Ascending aorta (tissue), 2 donors: ENCODE measurements at regions of chr19 and their contacts with region 1.

Region 1: GRCh38 chr19:40716655-40717324 is at the starts of genes COQ8B and ITPKC:
- DNase-seq: peak; percentile 96 to 99
- H3K4me3 ChIP-seq: peak within 1 kb of the TSS; percentile 72 to 100
- H3K27ac ChIP-seq: peak within 1 kb of the TSS; percentile 97 to 99
- H3K4me1 ChIP-seq: peaks cover 7 to 39% of the 10 kb centered on the region in 2 donors
- H3K27me3 ChIP-seq: no peaks in the 10 kb centered on the region
- CTCF ChIP-seq: peak in 1 of 3 experiments; percentile 69
- total RNA-seq, gene COQ8B: 33.3 TPM
- total RNA-seq, gene ITPKC: 60.7 TPM

Region 2: DNA sequence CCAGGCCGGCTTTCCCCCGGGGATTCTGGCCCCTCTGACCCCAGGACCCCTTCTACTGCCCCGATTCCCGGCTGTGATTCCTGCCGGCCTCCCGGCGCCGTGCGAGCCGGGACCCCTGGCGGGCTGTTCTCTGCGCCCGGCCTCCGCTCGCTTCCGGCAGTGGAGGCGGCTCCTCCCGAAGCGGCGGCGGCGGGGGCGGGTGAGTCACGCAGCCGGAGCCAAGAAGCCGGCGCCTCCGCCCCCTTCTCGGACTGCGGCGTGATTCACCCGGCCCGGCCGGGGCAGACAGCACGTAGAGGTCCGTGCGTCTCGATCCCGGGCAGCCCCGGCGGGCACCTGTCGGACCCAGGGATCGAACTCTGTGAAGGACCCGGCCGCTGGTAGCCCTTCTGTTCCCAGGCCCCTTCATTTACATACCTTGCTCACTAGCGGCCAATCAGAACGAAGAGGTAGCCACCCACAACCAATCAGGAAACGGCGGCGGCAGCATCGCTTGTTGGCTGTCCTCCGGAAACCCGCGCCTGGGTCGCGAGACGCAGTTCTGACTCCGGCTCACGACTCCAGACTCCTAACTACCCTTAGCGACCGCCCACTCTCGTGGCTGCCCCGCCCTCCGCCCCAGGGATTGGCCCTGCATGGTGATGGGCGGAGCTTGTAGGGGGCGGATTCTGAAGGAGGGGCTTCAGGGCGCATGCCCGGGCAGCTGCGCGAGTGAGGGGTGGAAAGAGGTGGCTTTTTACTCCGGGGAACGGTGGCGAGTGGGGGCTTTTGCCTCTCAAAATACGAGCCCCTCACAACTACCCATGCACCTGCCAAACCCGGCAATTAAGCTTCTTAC is 291.1 kb before region 1 on chr19 and contains the start of gene SERTAD1:
- intact Hi-C with region 1: loop called (anchors 5 kb)
- DNase-seq: peak; percentile 99 to 100
- H3K4me3 ChIP-seq: peak within 1 kb of the TSS; percentile 62 to 83
- H3K27ac ChIP-seq: peak within 1 kb of the TSS; percentile 98 to 99
- H3K4me1 ChIP-seq: peaks cover 14 to 30% of the 10 kb centered on the region in 2 donors
- H3K27me3 ChIP-seq: no peaks in the 10 kb centered on the region
- CTCF ChIP-seq: peak; percentile 75 to 86 (median 85)
- total RNA-seq, gene SERTAD1: 39.7 TPM

Region 3: DNA sequence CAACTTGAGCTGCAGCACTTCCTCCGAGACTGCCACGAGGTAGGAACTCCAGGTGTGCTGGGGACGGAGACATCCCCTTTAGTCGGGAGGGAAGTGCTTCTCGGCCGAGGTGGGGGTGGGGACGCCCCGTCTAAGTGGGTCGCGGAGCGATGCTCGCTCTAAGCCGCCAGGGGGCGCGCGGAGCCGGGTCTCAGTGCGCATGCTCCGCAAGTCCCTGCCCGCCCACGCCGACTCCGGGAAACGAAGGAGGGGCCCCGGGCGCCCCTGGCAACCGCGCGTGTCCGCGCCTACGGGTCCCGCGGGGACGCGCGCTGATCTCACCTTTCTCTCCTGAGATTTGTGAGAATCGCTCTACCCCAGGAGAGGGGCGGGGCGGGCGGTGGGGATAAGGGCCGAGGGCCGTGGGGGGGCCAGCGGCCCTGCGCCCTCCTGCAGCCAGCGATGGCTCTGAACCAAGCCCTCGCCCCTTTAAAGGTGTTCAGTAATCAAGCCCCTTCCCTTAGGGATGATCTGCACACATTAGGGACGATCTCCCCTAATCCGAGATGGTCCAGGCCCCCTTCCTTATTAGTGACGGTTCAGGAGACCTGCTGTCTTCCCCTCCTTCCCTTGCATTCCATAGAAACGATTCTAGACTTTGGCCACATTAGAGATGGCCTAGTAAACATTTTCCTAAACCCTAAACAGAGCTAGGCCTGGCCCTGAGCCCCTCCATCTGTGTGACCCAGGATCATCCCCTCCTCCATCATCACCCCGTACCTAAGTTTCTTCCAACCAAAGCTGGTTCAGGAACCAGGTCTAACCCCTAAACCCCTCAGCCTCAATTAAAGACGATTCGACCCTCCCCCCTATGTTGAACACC is 187.5 kb before region 1 on chr19:
- intact Hi-C with region 1: no loop called
- DNase-seq: peak; percentile 61 to 91
- H3K4me3 ChIP-seq: peak overlapping the region; percentile 58 to 62
- H3K27ac ChIP-seq: no peak overlapping the region
- H3K4me1 ChIP-seq: peaks cover 2 to 5% of the 10 kb centered on the region in 2 donors
- H3K27me3 ChIP-seq: no peaks in the 10 kb centered on the region
- CTCF ChIP-seq: peak; percentile 96 to 99 (median 98)

Region 4: DNA sequence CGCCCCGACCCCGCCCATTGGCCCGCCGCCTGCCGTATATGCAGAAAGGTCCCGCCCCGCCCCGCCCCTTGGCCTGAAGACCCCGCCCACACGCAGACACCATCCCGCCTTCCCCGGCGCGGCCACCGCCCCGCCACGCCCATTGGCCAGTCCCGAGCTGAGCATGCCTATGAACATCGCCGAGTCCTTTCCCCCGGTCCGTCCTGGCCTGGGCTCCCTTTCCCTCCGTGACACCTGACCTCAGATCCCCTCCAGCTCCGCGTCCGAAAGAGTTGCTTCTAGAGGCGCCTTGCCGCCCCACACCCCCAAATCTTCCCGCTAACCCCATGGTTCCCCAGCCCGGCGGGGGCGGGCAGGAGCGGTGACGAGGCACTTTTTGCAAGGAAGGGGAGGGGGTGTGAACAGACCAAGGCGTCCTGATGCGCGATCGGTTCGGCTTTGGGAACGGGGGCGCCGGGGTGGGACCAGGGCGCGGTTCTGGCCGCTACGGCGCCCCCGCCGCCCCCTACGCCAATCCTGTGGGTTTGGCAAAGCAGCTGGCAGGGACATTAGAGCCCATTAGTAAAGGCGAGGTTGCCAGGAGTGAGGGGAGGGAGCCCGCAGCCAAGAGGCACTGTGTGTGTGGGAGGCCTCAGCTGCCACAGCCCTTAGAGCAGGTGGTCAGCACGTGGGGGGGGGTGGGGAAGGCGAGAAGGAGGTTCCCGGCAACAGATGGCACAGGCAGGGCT is 25.9 kb before region 1 on chr19:
- intact Hi-C with region 1: loop called (anchors 1 kb)
- DNase-seq: peak; percentile 71 to 97
- H3K4me3 ChIP-seq: peak overlapping the region; percentile 84 to 86
- H3K27ac ChIP-seq: peak overlapping the region; percentile 89 to 93
- H3K4me1 ChIP-seq: peaks cover 6 to 24% of the 10 kb centered on the region in 2 donors
- H3K27me3 ChIP-seq: no peaks in the 10 kb centered on the region
- CTCF ChIP-seq: no peak

Region 5: GRCh38 chr19:40777937-40778705 is 61.3 kb after region 1 on chr19 and contains the start of gene RAB4B:
- intact Hi-C with region 1: loop called (anchors 1 kb)
- DNase-seq: peak; percentile 99 to 100
- H3K4me3 ChIP-seq: peak within 1 kb of the TSS; percentile 81 to 91
- H3K27ac ChIP-seq: peak within 1 kb of the TSS; percentile 97 to 99
- H3K4me1 ChIP-seq: peaks cover 0 to 13% of the 10 kb centered on the region in 2 donors
- H3K27me3 ChIP-seq: no peaks in the 10 kb centered on the region
- CTCF ChIP-seq: no peak
- total RNA-seq, gene RAB4B: 56.8 TPM

Region 6: DNA sequence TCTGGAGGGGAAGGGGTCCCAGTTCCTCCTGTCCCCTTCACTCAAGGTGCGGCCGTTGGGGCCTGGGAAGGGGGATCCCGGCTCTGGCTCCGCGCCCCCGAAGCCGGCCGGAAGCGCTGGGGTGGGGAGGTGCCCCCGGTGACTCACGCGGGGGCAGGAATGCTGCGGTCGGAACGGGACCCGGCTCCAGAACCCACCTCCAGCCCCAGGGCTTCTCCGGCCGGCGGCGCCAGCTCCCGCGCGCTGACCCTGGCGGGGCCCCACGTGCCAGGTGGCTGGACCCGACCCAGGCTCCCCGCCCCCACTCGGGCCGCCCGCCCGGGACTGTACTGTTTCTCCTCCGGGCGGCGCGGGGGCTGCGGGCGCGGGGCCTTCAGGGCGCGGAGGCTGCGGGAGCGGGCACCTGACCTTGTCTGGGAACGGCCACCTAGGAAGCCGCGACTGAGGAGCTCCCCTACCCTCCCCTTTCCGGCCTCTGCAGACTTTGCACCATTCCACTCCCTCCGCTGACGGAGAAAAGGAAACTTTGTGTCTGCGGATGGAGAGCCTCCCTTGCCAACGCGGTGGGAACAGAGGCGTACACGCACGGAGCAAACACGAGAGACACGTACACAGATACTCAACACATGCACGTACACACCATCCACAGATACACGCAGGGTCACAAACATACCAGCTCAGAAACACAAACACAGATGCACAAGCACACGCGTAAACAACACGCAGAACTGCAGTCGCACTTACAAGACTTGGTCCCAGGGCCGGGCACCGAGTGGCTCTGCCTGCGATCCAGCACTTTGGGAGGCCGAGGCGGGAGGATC is 509.5 kb after region 1 on chr19:
- intact Hi-C with region 1: loop called (anchors 2 kb)
- DNase-seq: peak; percentile 37 to 92
- H3K4me3 ChIP-seq: peak overlapping the region; percentile 63 to 66
- H3K27ac ChIP-seq: peak overlapping the region; percentile 92 to 93
- H3K4me1 ChIP-seq: peaks cover 7 to 32% of the 10 kb centered on the region in 2 donors
- H3K27me3 ChIP-seq: no peaks in the 10 kb centered on the region
- CTCF ChIP-seq: peak in 1 of 3 experiments; percentile 29